ENCODE measurements at regions of chr2 and their contacts with region 1.

Region 1: DNA sequence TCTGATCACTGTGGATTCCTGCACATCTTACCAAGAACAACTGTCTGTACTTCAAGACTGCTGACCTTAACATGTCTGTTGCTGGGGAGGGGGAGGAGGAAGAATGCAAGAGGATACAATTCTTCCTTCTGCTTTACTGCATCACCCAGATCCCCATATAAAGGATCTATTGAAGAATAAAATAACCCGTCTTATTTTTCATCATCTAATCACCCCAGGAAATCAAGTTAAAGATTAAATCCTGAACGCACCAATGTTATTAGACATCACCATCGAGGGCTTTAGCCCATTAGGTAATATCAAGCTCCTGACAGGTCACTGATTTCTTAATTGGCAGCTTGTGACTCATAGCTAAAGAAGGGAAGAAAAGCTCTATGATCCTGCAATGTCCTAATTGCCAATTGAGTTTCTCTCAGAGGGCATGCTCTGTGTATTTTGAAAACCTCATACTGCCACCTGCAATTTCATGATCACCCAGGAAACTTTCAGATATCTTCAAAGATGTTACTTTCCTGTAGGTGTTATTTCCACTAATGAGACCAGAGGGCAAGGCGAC is 75.4 kb upstream of the KCNE4 start:
- DNase-seq: no peak
- ATAC-seq: no peak
- H3K4me3 ChIP-seq: no peak overlapping the region
- H3K27ac ChIP-seq: no peak overlapping the region
- H3K4me1 ChIP-seq: no peaks in the 10 kb centered on the region
- H3K27me3 ChIP-seq: no peaks in the 10 kb centered on the region
- CTCF ChIP-seq: no peak

Region 2: GRCh38 chr2:223101340-223102039 is 124.9 kb after region 1 on chr2:
- intact Hi-C with region 1: loop called in 1 of 3 experiments (anchors 10 kb)
- DNase-seq: peak in 4 of 6 donors; percentile 22 to 74 (median 36)
- ATAC-seq: peak; percentile 78 to 83 (median 82)
- H3K4me3 ChIP-seq: no peak overlapping the region
- H3K27ac ChIP-seq: no peak overlapping the region
- H3K4me1 ChIP-seq: peaks cover 8 to 17% (median 14%) of the 10 kb centered on the region in 3 donors
- H3K27me3 ChIP-seq: no peaks in the 10 kb centered on the region
- CTCF ChIP-seq: peak in 3 of 4 donors; percentile 24 to 30 (median 25)

Region 3: DNA sequence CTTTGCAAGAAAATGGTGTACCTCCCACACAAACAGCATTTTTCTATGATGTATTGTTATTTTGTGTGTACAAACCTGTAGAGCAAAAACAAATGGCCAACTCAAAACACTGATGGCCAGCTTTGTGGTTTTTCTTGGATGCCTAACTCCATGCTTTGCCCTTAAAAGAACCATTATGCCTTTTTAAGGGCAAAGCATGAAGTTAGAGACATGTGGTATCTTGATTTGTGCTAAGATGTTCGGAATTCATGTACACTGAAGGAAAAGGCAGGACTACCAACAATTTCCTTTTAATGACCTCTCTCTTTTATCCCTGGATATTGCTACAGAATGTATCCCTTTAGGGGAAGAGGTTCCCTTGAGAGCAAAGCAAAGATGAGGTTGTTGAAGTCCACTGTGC is 352.0 kb after region 1 on chr2:
- intact Hi-C with region 1: no loop called
- DNase-seq: no peak
- ATAC-seq: no peak
- H3K4me3 ChIP-seq: no peak overlapping the region
- H3K27ac ChIP-seq: no peak overlapping the region
- H3K4me1 ChIP-seq: no peaks in the 10 kb centered on the region
- H3K27me3 ChIP-seq: no peaks in the 10 kb centered on the region
- CTCF ChIP-seq: no peak